ENCODE measurements at regions of chr17 and their contacts with region 1.

Region 1: DNA sequence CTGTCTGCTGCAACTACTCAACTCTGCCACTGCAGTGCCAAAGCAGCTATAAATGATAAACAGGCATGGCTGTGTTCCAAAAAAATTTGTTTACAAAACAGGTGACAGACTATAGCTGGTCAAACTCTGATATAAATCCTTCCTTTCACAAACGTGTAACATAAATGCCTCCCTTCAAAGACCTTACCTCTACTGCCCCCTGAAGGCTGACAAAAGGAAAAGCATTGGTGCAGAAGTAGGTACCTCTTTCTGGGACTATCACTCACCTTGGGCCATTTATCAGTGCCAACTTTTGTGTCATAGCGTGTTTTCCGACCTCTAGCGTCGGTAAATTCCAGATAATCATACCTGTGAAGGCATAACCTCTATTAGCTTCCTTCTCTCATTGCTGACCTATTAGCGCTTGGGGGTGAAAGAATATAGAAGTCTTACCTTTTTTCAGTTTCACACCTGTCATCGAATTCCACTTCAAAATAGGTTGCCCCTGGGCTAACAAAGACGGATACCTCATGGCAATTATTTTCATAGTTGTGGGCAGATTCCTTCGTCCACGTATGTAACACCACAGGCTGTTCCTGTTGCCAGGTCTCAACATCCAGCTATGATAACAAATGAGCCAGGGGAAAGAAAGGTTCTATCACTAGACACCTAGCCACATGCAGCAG is 67.9 kb downstream of the ZZEF1 start:
- DNase-seq: peak; percentile 27
- ATAC-seq: peak; percentile 90
- H3K4me3 ChIP-seq: no peak overlapping the region
- H3K27ac ChIP-seq: no peak overlapping the region
- H3K4me1 ChIP-seq: no peaks in the 10 kb centered on the region
- H3K27me3 ChIP-seq: no peaks in the 10 kb centered on the region
- CTCF ChIP-seq: peak; percentile 53 to 78 (median 74); a peak in 5 of 6 replicates
- POLR2A ChIP-seq: no peak
- RAD21 ChIP-seq: peak; percentile 64

Region 2: DNA sequence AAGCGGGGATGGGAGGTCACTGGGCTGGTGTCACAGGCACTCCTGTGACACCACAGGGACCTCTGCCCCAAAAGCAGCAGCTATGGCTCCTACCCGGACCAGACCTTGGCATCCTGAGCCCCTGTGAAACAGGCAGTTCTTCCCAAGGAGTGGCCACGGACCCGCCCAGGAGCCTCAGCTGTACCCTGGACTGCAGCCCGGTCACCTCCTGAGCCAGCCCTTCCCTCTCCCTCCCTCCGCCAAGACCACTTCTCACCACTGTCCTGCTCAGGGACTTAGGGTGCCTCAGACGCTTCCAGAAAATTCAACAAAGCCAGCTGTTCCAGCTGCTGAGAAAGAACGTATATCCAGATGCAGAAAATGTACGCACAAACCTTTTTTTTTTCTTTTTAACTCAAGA is 215.0 kb before region 1 on chr17:
- CTCF ChIA-PET with region 1: no interaction called
- POLR2A ChIA-PET with region 1: no interaction called
- RAD21 ChIA-PET with region 1: no interaction called
- intact Hi-C with region 1: loop called (anchors 5 kb)
- DNase-seq: no peak
- ATAC-seq: no peak
- H3K4me3 ChIP-seq: no peak overlapping the region
- H3K27ac ChIP-seq: no peak overlapping the region
- H3K4me1 ChIP-seq: no peaks in the 10 kb centered on the region
- H3K27me3 ChIP-seq: no peaks in the 10 kb centered on the region
- CTCF ChIP-seq: no peak
- POLR2A ChIP-seq: no peak
- RAD21 ChIP-seq: no peak

Region 3: DNA sequence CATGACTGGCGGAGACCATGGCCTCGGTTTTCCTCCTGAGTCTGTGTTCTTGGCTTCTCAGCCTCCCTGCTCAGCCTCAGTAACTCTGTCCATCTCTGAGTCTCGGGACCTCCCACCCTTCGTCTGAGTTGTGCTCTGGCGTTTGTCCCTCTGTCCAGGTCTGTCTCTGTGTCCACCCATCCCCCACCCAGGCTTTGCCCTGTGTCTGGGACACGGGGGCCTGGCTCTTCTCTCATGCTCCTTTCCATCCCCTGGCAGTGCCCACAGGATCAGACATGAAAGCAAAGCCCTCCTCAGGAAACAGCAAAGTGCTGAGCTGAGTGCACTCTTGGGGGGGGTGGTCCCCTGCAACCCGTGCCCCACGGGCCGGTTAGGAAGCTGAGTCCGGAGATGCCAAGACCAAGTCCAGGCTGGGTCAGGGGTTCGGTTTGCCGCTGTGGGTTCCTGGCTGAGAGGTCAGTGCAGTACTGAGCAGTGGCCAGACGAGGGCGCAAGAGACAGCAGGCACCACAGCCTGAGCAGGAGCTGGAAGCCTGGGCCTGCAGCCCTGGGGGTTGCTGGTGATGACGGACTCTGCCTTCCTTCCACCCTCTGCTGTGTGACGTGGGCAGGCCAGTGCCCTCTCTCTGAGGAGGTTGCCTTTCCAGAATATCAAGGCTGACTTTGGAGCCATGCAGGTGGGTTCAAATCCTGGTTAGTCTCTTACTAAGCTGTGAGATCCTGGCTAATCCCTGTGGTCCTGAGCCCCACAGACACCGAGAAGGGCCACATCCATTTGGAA is 161.2 kb before region 1 on chr17:
- CTCF ChIA-PET with region 1: no interaction called
- POLR2A ChIA-PET with region 1: no interaction called
- RAD21 ChIA-PET with region 1: no interaction called
- intact Hi-C with region 1: loop called (anchors 5 kb)
- DNase-seq: peak; percentile 54
- ATAC-seq: peak; percentile 95
- H3K4me3 ChIP-seq: no peak overlapping the region
- H3K27ac ChIP-seq: no peak overlapping the region
- H3K4me1 ChIP-seq: peaks cover 0 to 8% of the 10 kb centered on the region in 2 experiments; a peak in 2 of 4 replicates
- H3K27me3 ChIP-seq: no peaks in the 10 kb centered on the region
- CTCF ChIP-seq: peak; percentile 78 to 98 (median 96)
- POLR2A ChIP-seq: no peak
- RAD21 ChIP-seq: peak; percentile 91

Region 4: DNA sequence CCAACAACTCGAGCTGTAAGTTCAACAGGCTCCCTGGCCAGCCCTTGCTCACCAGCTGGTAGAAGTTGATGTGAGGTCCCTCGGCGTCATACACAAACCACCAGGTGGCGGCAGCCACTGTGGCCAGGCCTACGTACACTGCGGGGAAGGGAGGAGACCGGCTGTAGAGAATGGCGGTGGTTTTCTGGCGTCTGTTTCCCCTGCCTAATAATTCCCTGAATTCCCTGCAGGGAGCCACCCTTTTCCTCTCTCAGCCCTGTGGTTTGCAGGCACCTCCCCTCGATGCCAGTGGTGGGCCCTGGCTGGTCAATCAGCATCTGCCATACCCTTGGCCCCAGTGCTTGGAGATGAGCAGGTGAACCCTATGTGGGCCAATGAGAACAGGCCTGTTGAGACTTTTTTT is 139.8 kb before region 1 on chr17:
- CTCF ChIA-PET with region 1: no interaction called
- POLR2A ChIA-PET with region 1: no interaction called
- RAD21 ChIA-PET with region 1: interaction called in 1 of 2 experiments, 4 read pairs
- intact Hi-C with region 1: loop called (anchors 1 kb)
- DNase-seq: peak; percentile 41
- ATAC-seq: peak; percentile 99
- H3K4me3 ChIP-seq: no peak overlapping the region
- H3K27ac ChIP-seq: no peak overlapping the region
- H3K4me1 ChIP-seq: peaks cover 0 to 5% of the 10 kb centered on the region in 2 experiments; a peak in 1 of 4 replicates
- H3K27me3 ChIP-seq: no peaks in the 10 kb centered on the region
- CTCF ChIP-seq: peak; percentile 73 to 81 (median 77)
- POLR2A ChIP-seq: no peak
- RAD21 ChIP-seq: peak; percentile 87

Region 5: DNA sequence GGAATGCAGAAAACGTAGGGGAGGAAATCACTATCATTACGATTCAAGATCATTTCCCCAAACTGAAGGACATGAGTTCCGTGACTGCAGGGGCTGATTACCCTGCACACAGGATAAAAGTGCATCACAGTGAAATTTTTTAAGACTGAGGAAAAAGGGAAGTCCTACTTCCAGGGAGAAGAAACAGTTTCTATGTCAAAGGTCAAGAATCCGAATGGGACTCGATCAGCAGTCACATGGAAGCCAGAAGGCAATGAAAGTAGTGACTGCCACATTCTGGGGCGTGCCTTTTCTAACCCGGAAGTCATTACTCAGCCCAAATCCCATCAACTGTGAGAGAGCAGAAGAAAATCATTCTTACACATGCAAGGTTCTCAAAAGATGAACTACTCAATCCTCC is 55.8 kb after region 1 on chr17:
- CTCF ChIA-PET with region 1: no interaction called
- POLR2A ChIA-PET with region 1: no interaction called
- RAD21 ChIA-PET with region 1: no interaction called
- intact Hi-C with region 1: no loop called
- DNase-seq: no peak
- ATAC-seq: no peak
- H3K4me3 ChIP-seq: no peak overlapping the region
- H3K27ac ChIP-seq: no peak overlapping the region
- H3K4me1 ChIP-seq: no peaks in the 10 kb centered on the region
- H3K27me3 ChIP-seq: no peaks in the 10 kb centered on the region
- CTCF ChIP-seq: no peak
- POLR2A ChIP-seq: no peak
- RAD21 ChIP-seq: no peak